Right cardiac atrium (tissue), 5 donors: ENCODE measurements at regions of chr18 and their contacts with region 1.

Region 1: DNA sequence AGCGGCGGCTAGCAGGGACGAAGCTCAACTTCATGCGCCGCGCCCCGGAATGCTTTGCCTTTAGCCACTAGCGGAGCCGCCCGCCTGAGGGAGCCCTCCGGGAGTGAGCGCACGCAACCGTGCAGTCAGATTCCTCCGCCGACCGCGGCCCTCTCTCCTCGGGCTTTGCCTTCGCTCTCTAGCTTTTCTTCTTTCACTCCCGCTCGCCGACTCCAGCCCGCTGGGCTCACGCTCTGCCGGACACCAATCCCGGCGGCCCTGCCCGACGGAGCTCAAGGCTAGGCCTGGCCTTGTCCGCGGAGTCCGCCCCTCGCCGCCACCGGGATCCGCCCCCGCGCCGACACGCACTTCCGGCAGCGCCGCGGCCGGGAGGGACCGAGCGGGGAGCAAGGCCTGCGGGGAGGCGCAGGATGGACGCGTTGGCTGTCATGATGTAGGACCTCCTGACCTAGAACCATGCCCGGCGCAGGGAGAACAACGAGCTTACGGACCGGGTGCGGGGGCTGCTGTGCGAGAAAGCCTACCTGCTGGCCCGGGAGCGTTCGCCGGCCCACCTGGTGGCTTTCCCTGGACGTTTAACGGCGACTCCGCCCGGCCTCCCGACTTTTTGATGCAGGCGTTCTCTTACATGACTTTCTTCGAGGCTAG is 40.8 kb upstream of the AKAIN1 start:
- DNase-seq: peak; percentile 89 to 95 (median 95)
- ATAC-seq: peak; percentile 99 to 100
- H3K4me3 ChIP-seq: peak overlapping the region; percentile 58
- H3K27ac ChIP-seq: peak overlapping the region; percentile 99
- H3K4me1 ChIP-seq: peaks cover 2% of the 10 kb centered on the region
- H3K27me3 ChIP-seq: no peaks in the 10 kb centered on the region

Region 2: GRCh38 chr18:5132987-5133386 is 104.9 kb before region 1 on chr18:
- intact Hi-C with region 1: no loop called
- DNase-seq: peak in 1 of 3 donors; percentile 56
- ATAC-seq: no peak
- H3K4me3 ChIP-seq: no peak overlapping the region
- H3K27ac ChIP-seq: no peak overlapping the region
- H3K4me1 ChIP-seq: no peaks in the 10 kb centered on the region
- H3K27me3 ChIP-seq: no peaks in the 10 kb centered on the region

Region 3: DNA sequence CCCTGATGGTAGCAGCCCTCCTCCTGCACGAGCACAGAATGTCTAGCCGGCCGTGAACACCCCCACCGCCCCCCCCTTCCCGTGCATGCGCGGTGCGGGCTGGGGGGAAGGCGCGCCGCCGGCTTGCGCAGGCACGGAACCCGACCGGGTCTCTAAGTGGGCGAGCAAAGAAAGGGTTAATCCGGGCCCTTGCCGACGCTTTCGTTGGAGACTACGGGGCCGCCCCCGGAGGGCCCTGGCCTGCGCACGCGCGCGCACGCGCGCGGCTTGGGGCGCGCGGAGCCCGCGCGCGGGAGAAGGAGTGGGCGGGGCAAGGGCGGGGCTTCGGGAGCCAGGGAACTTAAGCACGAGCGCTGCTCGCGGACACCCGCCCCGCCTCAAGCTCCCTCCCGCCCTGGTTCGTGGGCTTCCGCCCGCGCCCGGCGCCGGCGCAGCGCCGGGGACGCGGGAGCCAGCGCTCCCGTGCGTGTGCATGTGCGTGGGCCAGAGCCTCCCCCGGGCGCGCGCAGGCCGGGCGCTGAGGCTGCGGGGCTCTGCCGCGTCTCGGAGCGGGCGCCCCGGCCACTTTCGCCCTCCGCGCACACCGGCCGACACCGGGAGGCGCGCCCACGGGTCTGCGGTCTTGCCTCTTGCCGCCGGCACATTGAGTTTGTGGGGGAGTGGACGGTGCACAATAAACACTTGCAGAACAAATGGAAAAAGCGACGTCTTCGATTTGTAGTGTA is 58.3 kb after region 1 on chr18:
- intact Hi-C with region 1: loop called in 3 of 4 experiments (anchors 2 to 10 kb)
- DNase-seq: peak; percentile 97 to 99 (median 99)
- ATAC-seq: peak; percentile 94 to 95
- H3K4me3 ChIP-seq: peak overlapping the region; percentile 100
- H3K27ac ChIP-seq: peak overlapping the region; percentile 100
- H3K4me1 ChIP-seq: peaks cover 2% of the 10 kb centered on the region
- H3K27me3 ChIP-seq: no peaks in the 10 kb centered on the region